Activated naive CD4-positive, alpha-beta T cell treated with anti-CD3 and anti-CD28 coated beads, Interleukin-2, amount 10 ng/mL, durations not matched to agents 7 days and 5 days (primary cell): ENCODE measurements at regions of chr1 and their contacts with region 1.

Region 1: GRCh38 chr1:209823143-209824041 is 4.4 kb upstream of the UTP25 start:
- DNase-seq: no peak
- H3K4me3 Mint-ChIP-seq: no peak overlapping the region
- H3K27ac Mint-ChIP-seq: no peak overlapping the region
- H3K4me1 Mint-ChIP-seq: peaks cover 22% of the 10 kb centered on the region
- H3K27me3 Mint-ChIP-seq: peaks cover 47% of the 10 kb centered on the region

Region 2: DNA sequence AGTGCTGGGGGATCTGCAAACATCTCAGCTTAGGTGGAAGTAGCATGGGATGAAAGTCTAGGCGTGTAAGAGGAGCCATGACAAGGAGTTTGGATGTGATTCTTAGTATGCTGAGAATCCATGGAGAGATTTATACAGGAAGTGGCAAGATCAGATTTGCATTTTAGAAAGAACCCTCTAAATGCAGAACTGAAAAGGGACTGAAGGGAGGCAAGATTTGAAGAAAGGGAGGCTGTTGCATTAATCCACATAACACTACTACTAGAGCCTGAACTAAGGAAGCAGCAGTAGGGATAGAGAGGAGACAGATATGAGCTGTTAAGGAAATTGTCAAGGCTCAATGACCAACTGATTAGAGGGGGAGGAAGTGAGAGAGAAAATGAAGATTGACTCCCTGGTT is 48.8 kb before region 1 on chr1:
- CTCF ChIA-PET with region 1: interaction called, 11 read pairs
- DNase-seq: no peak
- H3K4me3 Mint-ChIP-seq: no peak overlapping the region
- H3K27ac Mint-ChIP-seq: peak overlapping the region; percentile 24
- H3K4me1 Mint-ChIP-seq: peaks cover 27% of the 10 kb centered on the region
- H3K27me3 Mint-ChIP-seq: no peaks in the 10 kb centered on the region

Region 3: DNA sequence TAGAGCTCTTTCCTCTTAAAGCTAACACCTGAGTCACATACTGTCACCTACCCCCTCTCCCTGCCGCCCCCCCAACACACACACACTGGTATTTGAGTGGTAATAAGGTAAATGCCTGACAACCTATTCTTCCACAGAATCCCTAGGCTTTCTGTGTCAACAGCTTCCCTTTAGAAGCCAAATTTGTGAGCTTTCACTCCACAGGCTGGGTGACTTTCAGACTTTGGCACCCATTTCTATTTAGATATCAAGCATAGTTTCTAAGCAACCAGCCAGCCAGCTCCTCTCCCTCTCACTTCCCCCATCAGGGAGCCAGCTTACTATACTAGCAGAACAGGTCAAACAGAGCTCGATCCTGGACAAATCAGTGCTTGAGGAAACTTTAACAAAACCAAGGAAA is 35.8 kb before region 1 on chr1:
- CTCF ChIA-PET with region 1: interaction called, 13 read pairs
- DNase-seq: no peak
- H3K4me3 Mint-ChIP-seq: no peak overlapping the region
- H3K27ac Mint-ChIP-seq: no peak overlapping the region
- H3K4me1 Mint-ChIP-seq: peaks cover 47% of the 10 kb centered on the region
- H3K27me3 Mint-ChIP-seq: peaks cover 34% of the 10 kb centered on the region

Region 4: DNA sequence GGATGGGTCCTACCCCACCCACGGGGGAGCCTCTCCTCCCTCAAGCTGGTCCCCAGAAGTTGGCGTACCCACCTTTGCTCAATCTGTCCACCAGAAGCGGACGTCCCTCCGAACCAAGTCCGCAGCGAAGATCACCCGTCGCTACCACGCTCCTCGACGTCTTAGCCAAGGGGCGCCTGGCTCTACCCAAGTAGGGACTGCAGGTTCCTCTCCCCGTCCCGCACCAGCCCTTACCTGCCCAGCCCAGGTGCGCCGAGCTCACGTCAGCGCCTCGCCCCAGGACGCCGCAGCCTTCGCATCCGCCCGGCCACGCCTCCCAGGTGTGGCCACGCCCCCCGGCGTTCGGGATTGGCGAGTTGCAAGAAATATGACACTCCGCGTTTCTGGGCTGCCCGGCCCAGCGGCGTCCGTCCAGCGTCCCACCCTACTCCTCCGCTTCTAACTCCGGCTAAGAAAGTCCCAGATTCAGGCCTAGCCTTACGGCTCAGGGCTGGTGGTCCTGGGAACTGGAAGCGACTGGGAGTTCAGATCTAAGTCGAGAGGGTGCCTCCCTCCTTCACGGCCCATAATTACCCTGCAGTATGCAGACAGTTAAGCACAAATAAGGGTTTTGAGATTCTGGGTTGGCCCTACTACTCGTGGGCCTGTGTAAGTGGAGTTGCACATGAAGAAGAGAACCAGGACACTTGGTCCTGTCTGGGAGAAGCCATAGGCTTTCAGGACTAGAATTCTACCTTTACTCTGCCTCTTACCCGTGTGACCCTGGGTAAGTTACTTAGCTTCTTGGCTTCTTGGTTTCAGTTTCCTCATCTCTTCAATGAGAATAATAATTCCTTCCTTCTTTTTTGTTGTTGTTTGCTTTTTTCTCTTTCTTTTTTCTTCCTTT is 17.3 kb before region 1 on chr1 and contains the start of gene IRF6:
- CTCF ChIA-PET with region 1: interaction called, 48 read pairs
- DNase-seq: peak; percentile 80
- H3K4me3 Mint-ChIP-seq: peak within 1 kb of the TSS; percentile 80
- H3K27ac Mint-ChIP-seq: peak within 1 kb of the TSS; percentile 88
- H3K4me1 Mint-ChIP-seq: peaks cover 13% of the 10 kb centered on the region
- H3K27me3 Mint-ChIP-seq: peaks cover 55% of the 10 kb centered on the region

Region 5: GRCh38 chr1:209839875-209840491 is 16.6 kb after region 1 on chr1:
- CTCF ChIA-PET with region 1: interaction called, 26 read pairs
- DNase-seq: no peak
- H3K4me3 Mint-ChIP-seq: no peak overlapping the region
- H3K27ac Mint-ChIP-seq: no peak overlapping the region
- H3K4me1 Mint-ChIP-seq: no peaks in the 10 kb centered on the region
- H3K27me3 Mint-ChIP-seq: no peaks in the 10 kb centered on the region

Region 6: GRCh38 chr1:209890641-209891330 is 67.4 kb after region 1 on chr1:
- CTCF ChIA-PET with region 1: no interaction called
- DNase-seq: no peak
- H3K4me3 Mint-ChIP-seq: no peak overlapping the region
- H3K27ac Mint-ChIP-seq: no peak overlapping the region
- H3K4me1 Mint-ChIP-seq: peaks cover 4% of the 10 kb centered on the region
- H3K27me3 Mint-ChIP-seq: peaks cover 8% of the 10 kb centered on the region

Region 7: GRCh38 chr1:209937996-209938959 is 114.9 kb after region 1 on chr1 and contains the start of gene SYT14:
- CTCF ChIA-PET with region 1: no interaction called
- DNase-seq: no peak
- H3K4me3 Mint-ChIP-seq: peak within 1 kb of the TSS; percentile 65
- H3K27ac Mint-ChIP-seq: no peak within 1 kb of the TSS
- H3K4me1 Mint-ChIP-seq: peaks cover 14% of the 10 kb centered on the region
- H3K27me3 Mint-ChIP-seq: peaks cover 24% of the 10 kb centered on the region